ENCODE measurements at regions of chr20 and their contacts with region 1.

Region 1: GRCh38 chr20:63617092-63617865 is 9.6 kb downstream of the GMEB2 start:
- DNase-seq: no peak
- H3K4me3 ChIP-seq: no peak overlapping the region
- H3K27ac ChIP-seq: no peak overlapping the region
- H3K4me1 ChIP-seq: no peaks in the 10 kb centered on the region
- H3K27me3 ChIP-seq: no peaks in the 10 kb centered on the region
- CTCF ChIP-seq: no peak

Region 2: DNA sequence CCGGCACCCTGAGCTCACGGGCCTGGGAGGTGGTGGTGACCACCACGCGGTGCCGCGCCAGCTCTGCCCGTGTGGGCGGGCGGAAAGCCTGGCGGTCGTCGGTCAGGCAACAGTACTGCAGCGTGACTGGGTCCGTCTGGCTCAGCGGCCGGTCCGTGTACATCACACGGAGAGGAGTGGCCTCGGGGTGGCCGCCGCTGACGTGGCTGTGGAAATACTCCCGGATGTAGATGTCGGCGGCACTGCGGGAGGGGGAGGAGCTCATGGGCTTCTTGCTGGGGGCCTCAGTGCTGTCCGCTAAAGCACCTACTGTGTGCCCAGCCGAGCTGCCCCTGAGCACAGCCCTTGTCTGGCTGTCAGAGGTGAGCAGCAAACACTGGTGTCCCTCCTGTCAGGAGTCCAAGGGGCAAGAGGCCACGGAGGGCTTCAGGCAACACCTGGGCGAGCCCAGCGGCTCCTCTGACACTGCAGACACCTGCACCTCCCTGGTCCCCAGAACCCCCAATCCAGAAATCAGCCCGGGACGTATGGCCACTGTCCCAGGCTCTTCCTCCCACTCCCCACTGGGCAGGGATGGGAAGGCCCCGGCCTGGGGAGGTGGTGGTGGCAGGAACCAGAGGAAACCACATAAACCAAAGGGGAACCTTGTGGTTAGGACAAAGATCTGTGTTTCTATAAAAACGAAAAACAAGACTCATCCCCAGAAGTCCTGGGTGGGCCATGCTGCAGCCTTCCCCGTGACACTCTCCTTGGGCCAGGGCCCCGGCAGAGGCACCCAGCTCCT is 49.7 kb before region 1 on chr20:
- intact Hi-C with region 1: loop called (anchors 5 kb)
- DNase-seq: no peak
- H3K4me3 ChIP-seq: no peak overlapping the region
- H3K27ac ChIP-seq: no peak overlapping the region
- H3K4me1 ChIP-seq: peaks cover 0 to 1% (median 0%) of the 10 kb centered on the region in 4 donors
- H3K27me3 ChIP-seq: no peaks in the 10 kb centered on the region
- CTCF ChIP-seq: no peak

Region 3: GRCh38 chr20:63641792-63642544 is 24.7 kb after region 1 on chr20:
- intact Hi-C with region 1: no loop called
- DNase-seq: peak; percentile 79 to 91
- H3K4me3 ChIP-seq: peak overlapping the region; percentile 49 to 70
- H3K27ac ChIP-seq: peak overlapping the region; percentile 61 to 73
- H3K4me1 ChIP-seq: peaks cover 0 to 14% (median 9%) of the 10 kb centered on the region in 4 donors
- H3K27me3 ChIP-seq: peaks cover 0 to 4% of the 10 kb centered on the region in 2 donors
- CTCF ChIP-seq: peak; percentile 28 to 53

Measured in tibial artery (tissue), 4 donors.